ENCODE measurements at regions of chr12 and their contacts with region 1.

Region 1: GRCh38 chr12:52372216-52373154 is 5.2 kb upstream of the KRT85 start:
- DNase-seq: peak; percentile 91
- H3K4me3 ChIP-seq: no peak overlapping the region
- H3K27ac ChIP-seq: no peak overlapping the region
- H3K4me1 ChIP-seq: no peaks in the 10 kb centered on the region
- H3K27me3 ChIP-seq: no peaks in the 10 kb centered on the region
- CTCF ChIP-seq: peak; percentile 53 to 72 (median 70)
- POLR2A ChIP-seq: no peak

Region 2: DNA sequence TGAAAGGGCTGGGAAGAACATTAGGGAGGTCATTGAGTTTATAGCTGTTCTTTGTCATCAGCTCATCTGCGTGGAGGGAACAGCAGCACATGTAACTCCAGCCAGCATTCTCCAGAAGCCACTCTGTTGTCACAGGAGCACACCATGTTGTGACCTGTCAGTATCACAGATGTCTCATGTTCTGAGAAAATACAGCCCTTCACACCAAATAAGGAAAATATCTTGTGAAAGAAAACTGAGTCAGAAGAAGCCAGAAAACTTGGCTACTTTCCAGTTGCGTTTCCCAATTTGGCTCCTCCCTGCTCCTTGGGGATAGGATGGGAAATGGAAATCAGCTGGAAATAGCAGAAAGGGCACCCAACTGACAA is 43.9 kb after region 1 on chr12:
- intact Hi-C with region 1: no loop called
- DNase-seq: peak; percentile 37
- H3K4me3 ChIP-seq: no peak overlapping the region
- H3K27ac ChIP-seq: no peak overlapping the region
- H3K4me1 ChIP-seq: peaks cover 10% of the 10 kb centered on the region
- H3K27me3 ChIP-seq: no peaks in the 10 kb centered on the region
- CTCF ChIP-seq: no peak
- POLR2A ChIP-seq: no peak

Region 3: GRCh38 chr12:52870351-52871290 is 498.1 kb after region 1 on chr12:
- intact Hi-C with region 1: loop called (anchors 5 kb)
- DNase-seq: peak; percentile 69
- H3K4me3 ChIP-seq: no peak overlapping the region
- H3K27ac ChIP-seq: no peak overlapping the region
- H3K4me1 ChIP-seq: peaks cover 16% of the 10 kb centered on the region
- H3K27me3 ChIP-seq: no peaks in the 10 kb centered on the region
- CTCF ChIP-seq: peak; percentile 38 to 71 (median 61)
- POLR2A ChIP-seq: no peak

Measured in testis (tissue), 5 donors.